ENCODE measurements at regions of chr12 and their contacts with region 1.

Region 1: GRCh38 chr12:69239922-69240630 is 707 bp downstream of the CPSF6 start:
- DNase-seq: peak in 34 of 35 experiments; percentile 16 to 61 (median 40)
- ATAC-seq: peak; percentile 28 to 55 (median 54)
- H3K4me3 ChIP-seq: peak overlapping the region; percentile 72 to 80
- H3K4me3 Mint-ChIP-seq: peak overlapping the region; percentile 97
- H3K27ac ChIP-seq: peak overlapping the region; percentile 81
- H3K27ac Mint-ChIP-seq: peak overlapping the region; percentile 96 to 98
- H3K4me1 ChIP-seq: peaks cover 23 to 29% of the 10 kb centered on the region in 2 experiments
- H3K4me1 Mint-ChIP-seq: peaks cover 53 to 60% (median 57%) of the 10 kb centered on the region in 3 donors
- H3K27me3 ChIP-seq: no peaks in the 10 kb centered on the region
- H3K27me3 Mint-ChIP-seq: no peaks in the 10 kb centered on the region

Region 2: DNA sequence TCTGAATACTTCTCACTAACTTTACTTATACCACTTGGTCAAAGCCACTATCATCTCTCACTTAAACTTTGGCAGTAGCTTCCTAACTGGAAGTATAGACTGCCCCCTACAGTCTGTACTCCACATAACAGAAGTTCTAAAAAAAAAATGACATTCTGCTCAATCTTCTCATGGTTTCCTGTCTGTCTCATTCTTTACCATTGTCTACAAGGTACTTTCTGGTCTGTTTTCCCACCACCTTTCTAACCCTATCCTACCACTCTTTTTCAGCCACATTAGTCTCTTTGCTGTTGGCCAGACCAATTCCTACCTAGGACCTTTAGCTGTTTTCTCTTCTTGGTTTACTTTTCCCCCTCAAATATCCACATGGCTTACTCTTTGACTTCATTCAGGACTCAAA is 14.0 kb after region 1 on chr12:
- CTCF ChIA-PET with region 1: interaction called, 7 to 57 read pairs
- POLR2A ChIA-PET with region 1: interaction called, 5 to 6 read pairs
- DNase-seq: peak in 2 of 35 experiments; percentile 37 to 81
- ATAC-seq: peak; percentile 79 to 83 (median 82)
- H3K4me3 ChIP-seq: no peak overlapping the region
- H3K4me3 Mint-ChIP-seq: no peak overlapping the region
- H3K27ac ChIP-seq: peak overlapping the region; percentile 33
- H3K27ac Mint-ChIP-seq: peak overlapping the region; percentile 70 to 74
- H3K4me1 ChIP-seq: peaks cover 0 to 8% of the 10 kb centered on the region in 2 experiments
- H3K4me1 Mint-ChIP-seq: peaks cover 43 to 46% (median 43%) of the 10 kb centered on the region in 3 donors
- H3K27me3 ChIP-seq: no peaks in the 10 kb centered on the region
- H3K27me3 Mint-ChIP-seq: no peaks in the 10 kb centered on the region

Measured in T-cell (primary cell).